Endothelial cell of umbilical vein (primary cell): ENCODE measurements at regions of chr11 and their contacts with region 1.

Region 1: DNA sequence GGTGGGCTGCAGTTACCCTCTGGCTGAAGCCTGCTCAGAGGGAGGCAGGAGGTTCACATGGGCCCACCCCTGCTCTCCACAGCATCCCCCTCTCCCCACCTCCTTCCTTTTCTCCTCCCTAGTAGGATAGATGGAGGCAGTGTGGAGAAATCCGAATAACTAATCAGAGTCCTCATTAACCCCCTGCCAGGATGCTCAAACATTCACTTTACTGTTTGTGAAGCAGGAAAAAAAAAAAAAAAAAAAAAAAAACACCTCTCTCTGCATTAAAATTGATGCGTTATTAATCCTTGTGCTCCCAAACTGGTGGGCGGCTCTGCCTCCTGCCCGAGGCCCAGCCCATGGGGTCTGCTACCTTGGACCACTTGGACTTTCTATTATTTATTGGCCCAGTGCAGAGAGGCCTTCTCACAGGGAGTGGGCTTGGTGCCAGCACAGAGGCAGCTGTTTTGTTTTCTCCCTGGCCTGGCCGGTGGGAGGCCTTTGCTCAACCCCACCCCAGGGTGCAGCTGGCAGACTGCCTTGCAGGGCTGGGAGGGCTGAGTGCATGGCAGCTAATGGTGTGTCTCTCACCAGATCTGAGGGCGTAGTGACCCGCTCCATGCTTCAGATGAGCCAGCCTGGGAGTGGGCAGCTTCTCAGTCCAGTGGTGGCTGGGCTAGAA is 150.7 kb downstream of the PKNOX2 start:
- DNase-seq: peak; percentile 45
- H3K4me3 ChIP-seq: no peak overlapping the region
- H3K27ac ChIP-seq: no peak overlapping the region
- H3K4me1 ChIP-seq: peaks cover 11% of the 10 kb centered on the region
- H3K27me3 ChIP-seq: peaks cover 3 to 6% of the 10 kb centered on the region in 2 experiments
- CTCF ChIP-seq: no peak
- POLR2A ChIP-seq: no peak

Region 2: DNA sequence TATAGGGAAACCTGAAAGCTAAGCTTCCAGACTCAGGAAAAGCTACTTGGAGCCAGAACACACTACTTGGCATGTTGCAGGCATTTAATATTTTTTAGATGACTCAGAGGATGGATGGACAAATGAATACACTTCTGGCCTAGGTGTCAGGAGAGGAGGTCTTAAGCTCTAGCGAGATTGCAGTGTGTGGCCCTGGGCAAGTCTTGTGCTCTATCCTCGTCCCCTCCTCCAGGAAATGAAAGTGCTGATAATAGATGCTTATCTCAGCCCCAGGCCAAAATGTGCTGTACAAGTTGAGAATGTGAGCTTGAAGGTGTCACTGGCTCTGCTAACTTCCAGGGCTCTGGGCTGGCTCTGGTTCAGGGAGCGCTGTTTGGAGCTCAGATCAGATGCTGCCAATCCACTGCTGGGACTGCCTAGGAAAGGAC is 14.4 kb before region 1 on chr11:
- CTCF ChIA-PET with region 1: interaction called, 9 read pairs
- POLR2A ChIA-PET with region 1: interaction called, 9 read pairs
- dilution Hi-C with region 1: no loop called
- intact Hi-C with region 1: loop called (anchors 1 kb)
- DNase-seq: peak; percentile 80
- H3K4me3 ChIP-seq: no peak overlapping the region
- H3K27ac ChIP-seq: peak overlapping the region; percentile 68
- H3K4me1 ChIP-seq: peaks cover 42% of the 10 kb centered on the region
- H3K27me3 ChIP-seq: no peaks in the 10 kb centered on the region
- CTCF ChIP-seq: no peak
- POLR2A ChIP-seq: peak; percentile 31